Activated CD4-positive, alpha-beta memory T cell treated with anti-CD3 and anti-CD28 coated beads for 36 hours (primary cell): ENCODE measurements at regions of chr7 and their contacts with region 1.

Region 1: GRCh38 chr7:107672183-107672582 is 11.6 kb downstream of the SLC26A4 start:
- DNase-seq: no peak
- H3K4me3 Mint-ChIP-seq: no peak overlapping the region
- H3K27ac Mint-ChIP-seq: no peak overlapping the region
- H3K4me1 Mint-ChIP-seq: peaks cover 15% of the 10 kb centered on the region
- H3K27me3 Mint-ChIP-seq: peaks cover 13% of the 10 kb centered on the region

Region 2: GRCh38 chr7:107865956-107866775 is 194.0 kb after region 1 on chr7:
- CTCF ChIA-PET with region 1: no interaction called
- POLR2A ChIA-PET with region 1: no interaction called
- intact Hi-C with region 1: loop called (anchors 5 kb)
- DNase-seq: peak; percentile 54
- H3K4me3 Mint-ChIP-seq: no peak overlapping the region
- H3K27ac Mint-ChIP-seq: peak overlapping the region; percentile 79
- H3K4me1 Mint-ChIP-seq: peaks cover 26% of the 10 kb centered on the region
- H3K27me3 Mint-ChIP-seq: no peaks in the 10 kb centered on the region